Prostate gland (tissue), 2 donors: ENCODE measurements at regions of chr13 and their contacts with region 1.

Region 1: DNA sequence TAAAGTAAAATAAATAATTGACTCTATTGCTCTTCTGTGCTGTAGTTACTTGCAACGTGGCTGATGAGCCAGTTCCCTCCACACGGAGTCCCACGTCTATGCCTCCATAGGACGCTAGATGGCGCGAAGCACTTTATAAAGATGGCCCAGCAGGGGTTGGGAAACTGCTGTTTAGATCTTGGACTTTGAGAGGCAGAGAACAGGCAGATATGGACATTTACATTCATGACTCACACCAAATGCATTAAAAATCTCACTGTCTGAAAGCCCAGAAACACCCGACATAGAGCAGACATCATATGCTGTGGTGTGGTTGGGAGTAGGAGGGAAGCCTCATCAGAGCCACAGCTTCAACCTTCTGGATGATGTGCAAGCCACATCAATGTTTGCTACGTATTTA is 643.1 kb upstream of the ARGLU1 start:
- DNase-seq: peak; percentile 49
- H3K4me3 ChIP-seq: no peak overlapping the region
- H3K27ac ChIP-seq: no peak overlapping the region
- H3K4me1 ChIP-seq: no peaks in the 10 kb centered on the region
- H3K27me3 ChIP-seq: no peaks in the 10 kb centered on the region
- CTCF ChIP-seq: peak; percentile 53 to 70 (median 64)
- POLR2A ChIP-seq: no peak

Region 2: GRCh38 chr13:106905380-106906162 is 305.5 kb before region 1 on chr13:
- intact Hi-C with region 1: no loop called
- DNase-seq: no peak
- H3K4me3 ChIP-seq: no peak overlapping the region
- H3K27ac ChIP-seq: no peak overlapping the region
- H3K4me1 ChIP-seq: no peaks in the 10 kb centered on the region
- H3K27me3 ChIP-seq: no peaks in the 10 kb centered on the region
- CTCF ChIP-seq: no peak
- POLR2A ChIP-seq: no peak

Region 3: GRCh38 chr13:108154421-108154860 is 943.4 kb after region 1 on chr13:
- intact Hi-C with region 1: loop called (anchors 5 kb)
- DNase-seq: no peak
- H3K4me3 ChIP-seq: no peak overlapping the region
- H3K27ac ChIP-seq: no peak overlapping the region
- H3K4me1 ChIP-seq: no peaks in the 10 kb centered on the region
- H3K27me3 ChIP-seq: no peaks in the 10 kb centered on the region
- CTCF ChIP-seq: no peak
- POLR2A ChIP-seq: no peak